SK-N-SH (cell line): ENCODE measurements at regions of chr14 and their contacts with region 1.

Region 1: DNA sequence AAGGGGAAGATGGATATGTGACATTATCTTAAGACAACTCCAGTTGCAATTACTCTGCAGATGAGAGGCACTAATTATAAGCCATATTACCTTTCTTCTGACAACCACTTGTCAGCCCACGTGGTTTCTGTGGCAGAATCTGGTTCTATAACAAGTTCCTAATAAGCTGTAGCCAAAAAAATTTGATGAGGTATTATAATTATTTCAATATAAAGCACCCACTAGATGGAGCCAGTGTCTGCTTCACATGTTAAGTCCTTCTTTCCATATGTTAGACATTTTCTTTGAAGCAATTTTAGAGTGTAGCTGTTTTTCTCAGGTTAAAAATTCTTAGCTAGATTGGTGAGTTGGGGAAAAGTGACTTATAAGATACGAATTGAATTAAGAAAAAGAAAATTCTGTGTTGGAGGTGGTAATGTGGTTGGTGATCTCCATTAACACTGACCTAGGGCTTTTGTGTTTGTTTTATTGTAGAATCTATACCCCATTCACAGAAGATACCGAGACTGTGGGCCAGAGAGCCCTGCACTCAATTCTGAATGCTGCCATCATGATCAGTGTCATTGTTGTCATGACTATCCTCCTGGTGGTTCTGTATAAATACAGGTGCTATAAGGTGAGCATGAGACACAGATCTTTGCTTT is 36.9 kb downstream of the PSEN1 start:
- DNase-seq: peak; percentile 35
- H3K4me3 ChIP-seq: no peak overlapping the region; a peak in 1 of 4 replicates
- H3K27ac ChIP-seq: no peak overlapping the region
- H3K4me1 ChIP-seq: no peaks in the 10 kb centered on the region
- H3K27me3 ChIP-seq: no peaks in the 10 kb centered on the region
- CTCF ChIP-seq: peak; percentile 71
- EP300 ChIP-seq: no peak
- RAD21 ChIP-seq: peak; percentile 67

Region 2: GRCh38 chr14:73209953-73210352 is 36.7 kb after region 1 on chr14:
- CTCF ChIA-PET with region 1: interaction called, 11 read pairs
- POLR2A ChIA-PET with region 1: no interaction called
- DNase-seq: no peak
- H3K4me3 ChIP-seq: no peak overlapping the region
- H3K27ac ChIP-seq: peak overlapping the region in 1 of 2 experiments; percentile 42; a peak in 2 of 4 replicates
- H3K4me1 ChIP-seq: 0 out of 4 replicates have a peak, but pooled peaks cover 0 to 8% of the 10 kb centered on the region in 2 experiments
- H3K27me3 ChIP-seq: no peaks in the 10 kb centered on the region
- CTCF ChIP-seq: no peak
- EP300 ChIP-seq: no peak
- RAD21 ChIP-seq: no peak

Region 3: DNA sequence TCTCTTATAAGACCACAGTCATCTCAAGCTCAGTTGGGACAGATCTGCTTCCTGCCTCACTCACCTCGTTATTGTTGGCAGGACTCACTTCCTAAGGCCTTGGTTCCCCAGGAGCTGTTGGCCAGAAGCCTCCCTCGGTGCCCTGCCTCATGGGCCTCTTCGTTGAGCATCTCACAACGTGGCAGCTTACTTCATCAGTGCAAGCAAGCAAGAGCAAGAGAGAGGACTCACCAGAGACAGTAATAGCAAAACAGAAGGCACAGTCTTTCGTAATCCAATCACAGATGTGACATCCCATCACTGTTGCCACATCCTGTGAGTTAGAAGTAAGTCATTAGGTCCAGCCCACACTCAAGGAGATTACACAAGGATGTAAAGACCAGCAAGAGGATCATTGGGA is 290.2 kb after region 1 on chr14:
- CTCF ChIA-PET with region 1: interaction called, 13 read pairs
- POLR2A ChIA-PET with region 1: interaction called, 3 read pairs
- DNase-seq: no peak
- H3K4me3 ChIP-seq: peak overlapping the region in 1 of 2 experiments; percentile 41; a peak in 2 of 4 replicates
- H3K27ac ChIP-seq: peak overlapping the region; percentile 78 to 99
- H3K4me1 ChIP-seq: peaks cover 32 to 49% of the 10 kb centered on the region in 2 experiments
- H3K27me3 ChIP-seq: no peaks in the 10 kb centered on the region
- CTCF ChIP-seq: no peak
- EP300 ChIP-seq: no peak
- RAD21 ChIP-seq: no peak

Region 4: GRCh38 chr14:73472185-73473114 is 299.2 kb after region 1 on chr14:
- CTCF ChIA-PET with region 1: interaction called, 21 read pairs
- POLR2A ChIA-PET with region 1: no interaction called
- DNase-seq: peak; percentile 67
- H3K4me3 ChIP-seq: no peak overlapping the region; a peak in 1 of 4 replicates
- H3K27ac ChIP-seq: no peak overlapping the region
- H3K4me1 ChIP-seq: no peaks in the 10 kb centered on the region
- H3K27me3 ChIP-seq: no peaks in the 10 kb centered on the region
- CTCF ChIP-seq: peak; percentile 80
- EP300 ChIP-seq: no peak
- RAD21 ChIP-seq: peak; percentile 96